ENCODE measurements at regions of chr7 and their contacts with region 1.

Region 1: GRCh38 chr7:112080441-112080840 is 125.8 kb downstream of the DOCK4 start:
- H3K4me3 Mint-ChIP-seq: peak overlapping the region; percentile 68
- H3K27ac Mint-ChIP-seq: peak overlapping the region; percentile 92
- H3K4me1 Mint-ChIP-seq: peaks cover 36% of the 10 kb centered on the region
- H3K27me3 Mint-ChIP-seq: no peaks in the 10 kb centered on the region

Region 2: DNA sequence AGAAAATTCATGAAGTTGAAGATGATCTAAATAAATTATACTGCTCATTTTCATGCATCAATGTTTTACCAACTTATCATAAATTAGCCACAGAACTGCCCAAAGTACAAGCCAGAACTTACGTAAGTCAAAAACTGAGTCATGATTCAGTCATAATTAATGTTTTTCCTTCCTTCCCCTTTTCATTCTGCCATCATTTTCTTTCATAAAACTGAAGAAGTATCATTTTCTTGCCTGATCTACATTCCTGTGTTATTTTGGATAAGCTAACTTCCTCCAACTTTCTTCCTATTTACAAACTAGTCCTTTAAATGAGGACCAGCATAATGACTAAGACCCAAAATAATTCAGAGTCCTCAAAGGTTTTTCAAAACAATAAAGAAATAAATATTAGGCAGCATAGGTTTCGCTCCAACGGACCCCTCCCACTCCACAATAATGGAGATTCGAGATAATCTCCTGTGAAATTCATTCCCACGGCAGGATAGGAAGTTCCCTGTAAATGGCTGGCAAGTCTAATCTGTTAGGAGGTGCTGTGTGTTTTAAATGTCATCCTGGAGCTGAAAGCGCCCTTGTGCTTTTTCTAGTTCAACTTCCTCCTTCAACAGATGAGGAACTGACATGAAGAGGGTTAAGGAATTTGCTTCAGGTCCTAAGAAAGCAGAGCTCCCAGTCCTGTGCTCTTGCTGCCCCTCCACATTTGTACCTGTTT is 93.2 kb before region 1 on chr7:
- intact Hi-C with region 1: loop called (anchors 1 kb)
- H3K4me3 Mint-ChIP-seq: peak overlapping the region; percentile 41
- H3K27ac Mint-ChIP-seq: peak overlapping the region; percentile 72
- H3K4me1 Mint-ChIP-seq: peaks cover 25% of the 10 kb centered on the region
- H3K27me3 Mint-ChIP-seq: no peaks in the 10 kb centered on the region

Region 3: DNA sequence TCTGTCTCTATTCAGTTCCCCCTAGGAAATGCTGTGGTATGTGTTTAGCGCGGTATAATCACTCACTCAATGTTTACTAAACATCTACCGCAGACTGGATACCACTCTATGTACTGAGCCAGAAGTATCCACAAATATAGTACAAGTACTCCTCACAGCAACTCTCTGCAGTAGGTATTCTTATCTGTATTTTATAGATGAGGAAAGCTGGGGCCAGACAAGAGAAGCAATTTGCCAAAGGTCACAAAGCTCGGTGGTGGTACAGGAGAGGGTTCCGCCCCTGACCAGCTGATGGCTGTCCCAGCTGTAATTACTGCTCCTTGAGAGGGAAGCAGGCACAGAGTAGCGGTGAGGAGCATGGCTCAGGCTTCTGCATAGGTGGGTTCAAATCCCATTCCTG is 58.3 kb before region 1 on chr7:
- intact Hi-C with region 1: no loop called
- H3K4me3 Mint-ChIP-seq: no peak overlapping the region
- H3K27ac Mint-ChIP-seq: no peak overlapping the region
- H3K4me1 Mint-ChIP-seq: no peaks in the 10 kb centered on the region
- H3K27me3 Mint-ChIP-seq: no peaks in the 10 kb centered on the region

Region 4: GRCh38 chr7:112112822-112113255 is 32.4 kb after region 1 on chr7:
- intact Hi-C with region 1: loop called (anchors 2 kb)
- H3K4me3 Mint-ChIP-seq: peak overlapping the region; percentile 65
- H3K27ac Mint-ChIP-seq: peak overlapping the region; percentile 90
- H3K4me1 Mint-ChIP-seq: peaks cover 45% of the 10 kb centered on the region
- H3K27me3 Mint-ChIP-seq: no peaks in the 10 kb centered on the region

Region 5: GRCh38 chr7:112124061-112124766 is 43.8 kb after region 1 on chr7:
- intact Hi-C with region 1: loop called (anchors 1 kb)
- H3K4me3 Mint-ChIP-seq: peak overlapping the region; percentile 26
- H3K27ac Mint-ChIP-seq: peak overlapping the region; percentile 84
- H3K4me1 Mint-ChIP-seq: peaks cover 40% of the 10 kb centered on the region
- H3K27me3 Mint-ChIP-seq: no peaks in the 10 kb centered on the region

Measured in dendritic cell treated with granulocyte-macrophage colony-stimulating factor and Interleukin-4, amounts not matched to agents 40 ng/mL and 50 ng/mL, for 4 days (primary cell).